Tibial artery (tissue), 4 donors: ENCODE measurements at regions of chr15 and their contacts with region 1.

Region 1: DNA sequence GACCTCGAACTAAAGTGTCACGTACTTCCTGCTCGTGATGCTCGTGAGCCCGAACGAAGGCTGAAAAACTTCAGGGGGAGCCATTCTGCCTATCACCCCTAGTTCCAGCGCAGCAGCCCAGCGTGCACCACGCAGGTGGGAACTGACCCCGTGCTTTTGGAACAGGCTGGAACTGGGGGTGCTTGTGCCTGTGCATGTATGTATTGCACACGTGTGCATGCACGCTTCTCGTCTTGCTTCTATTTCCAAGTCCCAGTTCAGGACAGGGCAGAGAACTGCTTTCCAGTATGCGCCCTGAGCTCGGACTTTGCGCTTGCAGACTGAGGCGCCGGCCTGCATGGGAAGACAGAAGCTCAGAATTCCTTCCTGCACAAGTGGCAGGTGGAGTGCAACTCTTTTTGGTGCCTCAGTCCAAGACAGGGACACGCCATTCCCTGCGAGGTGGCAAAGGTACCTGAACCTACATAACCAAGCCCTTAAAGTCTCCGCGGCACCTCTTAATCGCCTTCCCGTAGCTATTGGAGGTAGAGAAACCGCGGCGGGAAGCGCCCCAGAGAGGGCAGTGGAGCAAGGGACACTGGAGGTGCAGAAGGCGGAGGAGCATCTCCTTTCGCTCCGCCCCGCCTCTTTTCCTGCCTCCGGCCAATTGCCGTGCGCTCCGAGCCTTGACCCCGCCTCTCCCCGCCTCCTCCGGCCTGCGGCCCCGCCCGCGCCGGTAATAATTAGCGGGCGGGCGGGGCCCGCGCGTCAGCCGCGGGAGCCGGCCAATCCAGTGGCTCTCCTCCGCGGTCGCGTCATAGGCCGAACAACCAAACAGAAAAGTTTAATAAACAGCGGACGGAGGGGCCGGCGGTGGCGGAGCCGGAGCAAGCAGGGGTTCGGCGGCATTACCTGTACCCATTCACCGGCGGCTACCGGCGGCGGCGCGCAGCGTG is at the start of gene ZFAND6:
- DNase-seq: peak; percentile 92 to 97
- H3K4me3 ChIP-seq: peak within 1 kb of the TSS; percentile 91 to 94
- H3K27ac ChIP-seq: peak within 1 kb of the TSS; percentile 84 to 94
- H3K4me1 ChIP-seq: peaks cover 0 to 28% (median 16%) of the 10 kb centered on the region in 4 donors
- H3K27me3 ChIP-seq: no peaks in the 10 kb centered on the region
- CTCF ChIP-seq: no peak

Region 2: GRCh38 chr15:79923515-79924395 is 135.4 kb before region 1 on chr15:
- intact Hi-C with region 1: loop called (anchors 10 kb)
- DNase-seq: peak; percentile 89 to 96
- H3K4me3 ChIP-seq: peak overlapping the region; percentile 74 to 83
- H3K27ac ChIP-seq: peak overlapping the region; percentile 90 to 91
- H3K4me1 ChIP-seq: peaks cover 0 to 12% (median 8%) of the 10 kb centered on the region in 4 donors
- H3K27me3 ChIP-seq: no peaks in the 10 kb centered on the region
- CTCF ChIP-seq: peak in 1 of 2 experiments; percentile 4

Region 3: GRCh38 chr15:80152180-80152845 is 93.2 kb after region 1 on chr15:
- intact Hi-C with region 1: loop called (anchors 5 kb)
- DNase-seq: peak; percentile 98 to 99
- H3K4me3 ChIP-seq: peak overlapping the region; percentile 75 to 85
- H3K27ac ChIP-seq: peak overlapping the region; percentile 94
- H3K4me1 ChIP-seq: peaks cover 0 to 27% (median 17%) of the 10 kb centered on the region in 4 donors
- H3K27me3 ChIP-seq: no peaks in the 10 kb centered on the region
- CTCF ChIP-seq: no peak

Region 4: GRCh38 chr15:80396094-80396493 is 337.0 kb after region 1 on chr15:
- intact Hi-C with region 1: loop called (anchors 10 kb)
- DNase-seq: no peak
- H3K4me3 ChIP-seq: no peak overlapping the region
- H3K27ac ChIP-seq: no peak overlapping the region
- H3K4me1 ChIP-seq: peaks cover 0 to 2% (median 0%) of the 10 kb centered on the region in 4 donors
- H3K27me3 ChIP-seq: no peaks in the 10 kb centered on the region
- CTCF ChIP-seq: no peak